ENCODE measurements at regions of chr17 and their contacts with region 1.

Region 1: GRCh38 chr17:43211480-43212402 is at the start of gene TMEM106A:
- DNase-seq: peak; percentile 81
- ATAC-seq: peak; percentile 95
- H3K4me3 Mint-ChIP-seq: peak within 1 kb of the TSS; percentile 98
- H3K27ac Mint-ChIP-seq: peak within 1 kb of the TSS; percentile 90
- H3K4me1 Mint-ChIP-seq: peaks cover 28% of the 10 kb centered on the region
- H3K27me3 Mint-ChIP-seq: no peaks in the 10 kb centered on the region
- CTCF ChIP-seq: peak; percentile 49
- total RNA-seq, gene TMEM106A: 9.2 to 9.8 TPM

Region 2: GRCh38 chr17:43018008-43018853 is 193.5 kb before region 1 on chr17:
- CTCF ChIA-PET with region 1: no interaction called
- POLR2A ChIA-PET with region 1: no interaction called
- intact Hi-C with region 1: loop called (anchors 10 kb)
- DNase-seq: no peak
- ATAC-seq: peak; percentile 15
- H3K4me3 Mint-ChIP-seq: no peak overlapping the region
- H3K27ac Mint-ChIP-seq: no peak overlapping the region
- H3K4me1 Mint-ChIP-seq: peaks cover 31% of the 10 kb centered on the region
- H3K27me3 Mint-ChIP-seq: no peaks in the 10 kb centered on the region
- CTCF ChIP-seq: no peak

Region 3: DNA sequence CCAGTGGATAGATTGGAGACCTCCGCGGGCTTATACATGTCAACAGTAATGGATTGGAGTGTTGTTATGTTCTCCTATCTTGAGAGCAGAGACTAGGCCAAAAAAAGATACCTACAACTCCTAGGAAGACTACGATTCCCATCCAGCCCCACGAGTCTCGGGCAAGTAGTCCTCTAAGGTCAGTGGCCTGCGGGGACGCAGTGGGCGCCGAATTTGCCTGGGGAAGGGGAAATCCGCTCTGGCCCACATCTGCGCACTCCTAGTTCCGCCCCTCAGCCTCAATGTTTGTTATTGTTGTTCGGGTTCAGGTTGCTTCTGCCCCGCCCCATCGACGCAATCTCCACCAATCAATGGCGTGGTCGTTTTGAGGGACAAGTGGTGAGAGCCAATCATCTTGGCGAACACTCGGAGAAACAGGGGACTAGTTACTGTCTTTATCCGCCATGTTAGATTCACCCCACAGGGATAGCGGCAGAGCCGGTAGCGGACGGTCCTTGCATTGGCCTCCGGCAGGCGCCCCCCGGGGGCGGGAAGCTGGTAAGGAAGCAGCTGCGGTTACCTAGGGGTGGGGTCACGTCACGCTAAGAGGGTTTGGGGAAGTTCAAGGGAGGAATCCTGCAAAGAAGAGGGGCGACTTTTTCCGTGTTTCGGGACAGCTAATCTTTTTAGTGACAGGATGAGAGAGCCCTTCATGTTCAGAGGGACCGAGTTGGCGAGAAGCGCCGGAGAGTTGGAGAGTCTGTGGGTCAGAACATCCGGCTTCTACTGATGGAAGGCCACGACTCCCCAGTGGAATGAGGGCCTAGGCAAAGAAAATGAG is 40.8 kb before region 1 on chr17 and contains the start of gene NBR1:
- CTCF ChIA-PET with region 1: interaction called, 5 read pairs
- POLR2A ChIA-PET with region 1: interaction called, 22 read pairs
- intact Hi-C with region 1: loop called (anchors 5 kb)
- DNase-seq: peak; percentile 99
- ATAC-seq: peak; percentile 85
- H3K4me3 Mint-ChIP-seq: no peak within 1 kb of the TSS
- H3K27ac Mint-ChIP-seq: no peak within 1 kb of the TSS
- H3K4me1 Mint-ChIP-seq: peaks cover 33% of the 10 kb centered on the region
- H3K27me3 Mint-ChIP-seq: no peaks in the 10 kb centered on the region
- CTCF ChIP-seq: no peak
- total RNA-seq, gene NBR1: 45.6 to 46.5 TPM

Region 4: DNA sequence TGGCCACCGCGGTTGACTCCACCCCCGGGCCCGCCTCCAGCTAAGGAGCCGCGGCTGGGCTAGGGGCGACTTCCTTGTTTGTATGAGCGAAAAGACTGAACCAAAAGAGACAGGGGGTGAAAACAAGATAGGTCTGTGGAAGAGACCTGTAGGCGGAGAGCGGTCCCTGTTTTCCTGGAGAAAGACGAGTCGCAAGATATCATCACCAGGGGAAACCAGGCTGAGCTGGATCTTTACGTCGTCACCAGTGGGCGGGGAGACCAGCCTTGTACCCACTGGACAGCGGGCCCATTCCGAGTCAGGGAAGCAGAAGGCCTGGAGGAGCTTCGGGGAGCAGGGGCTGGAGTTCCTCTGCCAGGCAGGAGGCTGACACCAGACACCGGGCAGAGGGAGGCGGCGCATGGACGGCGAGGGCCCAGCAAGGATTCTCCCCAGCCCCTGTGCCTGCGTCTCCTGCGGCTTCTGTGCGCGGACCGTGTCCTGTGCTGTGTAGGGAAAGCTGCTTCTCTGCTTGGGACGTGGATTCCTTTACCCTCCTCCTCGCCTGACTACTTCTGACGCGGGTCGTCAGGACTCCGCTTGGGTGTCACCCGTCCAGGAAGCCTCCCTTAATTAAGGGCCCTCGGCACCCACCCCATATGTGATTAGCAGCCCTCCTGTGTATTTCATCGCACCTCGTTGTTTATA is 176.8 kb after region 1 on chr17:
- CTCF ChIA-PET with region 1: no interaction called
- POLR2A ChIA-PET with region 1: no interaction called
- intact Hi-C with region 1: no loop called
- DNase-seq: peak; percentile 94
- ATAC-seq: peak; percentile 76
- H3K4me3 Mint-ChIP-seq: peak overlapping the region; percentile 82
- H3K27ac Mint-ChIP-seq: peak overlapping the region; percentile 99
- H3K4me1 Mint-ChIP-seq: peaks cover 5% of the 10 kb centered on the region
- H3K27me3 Mint-ChIP-seq: no peaks in the 10 kb centered on the region
- CTCF ChIP-seq: no peak

Region 5: GRCh38 chr17:43517615-43518386 is 306.1 kb after region 1 on chr17:
- CTCF ChIA-PET with region 1: no interaction called
- POLR2A ChIA-PET with region 1: no interaction called
- intact Hi-C with region 1: no loop called
- DNase-seq: peak; percentile 14
- ATAC-seq: peak; percentile 71
- H3K4me3 Mint-ChIP-seq: no peak overlapping the region
- H3K27ac Mint-ChIP-seq: peak overlapping the region; percentile 60
- H3K4me1 Mint-ChIP-seq: peaks cover 10% of the 10 kb centered on the region
- H3K27me3 Mint-ChIP-seq: no peaks in the 10 kb centered on the region
- CTCF ChIP-seq: no peak